Panc1 (cell line): ENCODE measurements at regions of chr3 and their contacts with region 1.

Region 1: DNA sequence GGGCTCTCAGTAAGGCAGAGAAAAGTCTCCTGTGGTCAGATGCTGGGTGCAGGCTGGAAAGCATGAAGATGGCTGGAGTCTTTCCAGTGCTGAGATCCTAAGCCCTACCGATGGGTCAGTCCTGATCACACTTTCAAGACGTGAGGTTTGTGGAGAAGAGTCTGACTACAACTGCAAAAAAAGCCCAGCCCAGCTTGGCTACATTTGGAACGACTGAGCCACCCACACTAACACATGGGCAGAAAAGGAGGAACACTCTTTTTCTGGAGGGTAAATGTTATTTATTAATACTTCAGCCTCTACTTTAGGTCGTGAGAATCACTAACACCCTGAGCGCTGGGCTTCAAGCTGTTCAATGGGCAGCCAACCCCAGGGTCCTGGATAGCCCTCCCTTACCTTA is 22.0 kb upstream of the C3orf22 start:
- DNase-seq: no peak
- ATAC-seq: no peak
- H3K4me3 ChIP-seq: no peak overlapping the region
- H3K27ac ChIP-seq: no peak overlapping the region
- H3K4me1 ChIP-seq: no peaks in the 10 kb centered on the region
- H3K27me3 ChIP-seq: peaks cover 15% of the 10 kb centered on the region
- CTCF ChIP-seq: no peak

Region 2: GRCh38 chr3:126551121-126552071 is 29.4 kb before region 1 on chr3:
- CTCF ChIA-PET with region 1: no interaction called
- POLR2A ChIA-PET with region 1: no interaction called
- in situ Hi-C with region 1: no loop called
- intact Hi-C with region 1: no loop called
- DNase-seq: no peak
- ATAC-seq: no peak
- H3K4me3 ChIP-seq: no peak overlapping the region
- H3K27ac ChIP-seq: no peak overlapping the region
- H3K4me1 ChIP-seq: no peaks in the 10 kb centered on the region
- H3K27me3 ChIP-seq: no peaks in the 10 kb centered on the region; the same call in 1 of the 2 replicates
- CTCF ChIP-seq: no peak

Region 3: DNA sequence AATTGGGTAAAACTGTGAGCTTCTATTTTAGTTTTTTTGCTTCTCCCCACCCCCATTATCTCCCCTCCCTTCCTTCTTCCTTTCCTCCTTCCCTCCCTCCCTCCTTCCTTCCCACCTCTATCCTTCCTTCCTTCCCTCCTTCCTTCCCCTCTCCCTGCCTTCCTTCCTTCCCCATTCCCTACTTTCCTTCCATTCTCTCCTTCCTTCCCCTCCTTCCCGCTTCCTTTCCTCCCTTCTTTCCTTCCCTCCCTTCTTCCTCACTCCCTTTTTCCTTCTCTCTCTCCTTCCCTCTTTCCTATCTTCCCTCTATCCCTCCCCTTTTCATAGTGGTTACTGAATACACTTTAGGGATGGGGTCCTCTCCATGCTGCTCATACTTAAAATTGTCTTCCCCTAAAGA is 18.4 kb after region 1 on chr3:
- CTCF ChIA-PET with region 1: no interaction called
- POLR2A ChIA-PET with region 1: no interaction called
- in situ Hi-C with region 1: no loop called
- intact Hi-C with region 1: loop called (anchors 1 kb)
- DNase-seq: no peak
- ATAC-seq: no peak
- H3K4me3 ChIP-seq: no peak overlapping the region
- H3K27ac ChIP-seq: no peak overlapping the region
- H3K4me1 ChIP-seq: no peaks in the 10 kb centered on the region
- H3K27me3 ChIP-seq: no peaks in the 10 kb centered on the region
- CTCF ChIP-seq: no peak